Naive thymus-derived CD4-positive, alpha-beta T cell (primary cell): ENCODE measurements at regions of chr14 and their contacts with region 1.

Region 1: GRCh38 chr14:51219473-51220448 is 20.3 kb upstream of the TMX1 start:
- DNase-seq: no peak
- ATAC-seq: no peak
- H3K4me3 ChIP-seq: no peak overlapping the region
- H3K4me3 Mint-ChIP-seq: no peak overlapping the region
- H3K27ac ChIP-seq: no peak overlapping the region
- H3K27ac Mint-ChIP-seq: no peak overlapping the region
- H3K4me1 ChIP-seq: no peaks in the 10 kb centered on the region
- H3K4me1 Mint-ChIP-seq: no peaks in the 10 kb centered on the region
- H3K27me3 ChIP-seq: no peaks in the 10 kb centered on the region
- H3K27me3 Mint-ChIP-seq: peaks cover 0 to 2% (median 0%) of the 10 kb centered on the region in 5 donors

Region 2: GRCh38 chr14:50954811-50955372 is 264.9 kb before region 1 on chr14:
- CTCF ChIA-PET with region 1: no interaction called
- POLR2A ChIA-PET with region 1: no interaction called
- intact Hi-C with region 1: loop called (anchors 1 to 10 kb)
- DNase-seq: peak in 2 of 9 donors; percentile 4 to 22
- ATAC-seq: peak; percentile 70
- H3K4me3 ChIP-seq: no peak overlapping the region
- H3K4me3 Mint-ChIP-seq: no peak overlapping the region
- H3K27ac ChIP-seq: no peak overlapping the region
- H3K27ac Mint-ChIP-seq: no peak overlapping the region
- H3K4me1 ChIP-seq: no peaks in the 10 kb centered on the region
- H3K4me1 Mint-ChIP-seq: no peaks in the 10 kb centered on the region
- H3K27me3 ChIP-seq: no peaks in the 10 kb centered on the region
- H3K27me3 Mint-ChIP-seq: peaks cover 0 to 3% (median 0%) of the 10 kb centered on the region in 5 donors

Region 3: DNA sequence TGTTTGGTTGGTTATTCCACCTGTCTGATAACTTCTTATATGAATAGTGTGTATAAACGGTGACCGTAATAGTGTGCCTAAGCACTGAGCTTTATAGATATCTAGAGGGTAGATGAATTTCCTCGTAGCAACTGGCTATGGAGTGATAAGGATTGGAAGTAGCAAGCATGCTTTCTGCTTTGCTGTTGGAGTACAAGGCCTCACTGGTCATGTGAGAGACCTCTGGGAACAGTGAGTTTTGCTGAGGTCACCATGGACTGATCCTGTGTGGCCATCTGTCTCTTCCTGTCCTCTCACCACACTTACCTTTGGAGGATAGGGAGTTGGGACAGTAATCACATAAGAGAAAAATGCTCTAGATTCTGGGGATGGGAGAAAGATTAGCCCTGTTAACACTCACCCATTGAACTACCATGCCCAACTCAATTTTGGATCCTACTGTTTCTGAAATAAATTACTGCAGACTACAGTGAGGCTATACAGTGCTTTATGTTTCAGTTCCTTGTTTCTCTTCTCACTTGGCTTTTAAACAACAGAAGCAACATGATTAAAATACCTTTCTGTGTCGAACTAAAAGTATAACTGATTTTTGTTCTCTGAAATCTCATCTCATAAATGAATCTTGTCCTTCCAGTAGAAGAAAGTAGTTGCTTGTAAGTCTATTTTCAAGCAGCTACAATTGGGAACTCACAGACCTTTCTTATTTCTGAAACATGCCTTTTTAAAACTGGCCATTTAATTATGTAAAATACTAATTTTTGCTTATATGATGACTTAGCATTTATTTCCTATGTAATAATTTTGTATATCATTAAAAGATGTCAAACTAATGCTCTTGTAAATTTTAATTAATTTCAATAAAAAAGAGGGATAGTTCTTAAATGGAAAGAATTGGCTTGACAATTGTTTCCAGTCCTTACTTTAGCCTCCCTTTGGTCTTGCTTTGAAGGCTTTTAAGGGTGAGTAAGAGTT is 28.5 kb after region 1 on chr14:
- CTCF ChIA-PET with region 1: no interaction called
- POLR2A ChIA-PET with region 1: no interaction called
- intact Hi-C with region 1: no loop called
- DNase-seq: no peak
- ATAC-seq: no peak
- H3K4me3 ChIP-seq: no peak overlapping the region
- H3K4me3 Mint-ChIP-seq: no peak overlapping the region
- H3K27ac ChIP-seq: no peak overlapping the region
- H3K27ac Mint-ChIP-seq: no peak overlapping the region
- H3K4me1 ChIP-seq: peaks cover 0 to 3% of the 10 kb centered on the region in 2 donors
- H3K4me1 Mint-ChIP-seq: peaks cover 0 to 32% (median 16%) of the 10 kb centered on the region in 7 donors
- H3K27me3 ChIP-seq: no peaks in the 10 kb centered on the region
- H3K27me3 Mint-ChIP-seq: no peaks in the 10 kb centered on the region

Region 4: GRCh38 chr14:52267501-52268278 is 1047.9 kb after region 1 on chr14 and contains the start of gene PTGDR:
- CTCF ChIA-PET with region 1: no interaction called
- POLR2A ChIA-PET with region 1: no interaction called
- intact Hi-C with region 1: no loop called
- DNase-seq: peak in 2 of 9 donors; percentile 13 to 43
- ATAC-seq: peak; percentile 73
- H3K4me3 ChIP-seq: peak within 1 kb of the TSS; percentile 53
- H3K4me3 Mint-ChIP-seq: peak within 1 kb of the TSS; percentile 54 to 94 (median 82)
- H3K27ac ChIP-seq: no peak within 1 kb of the TSS
- H3K27ac Mint-ChIP-seq: peak within 1 kb of the TSS in 4 of 9 donors; percentile 45 to 73 (median 64)
- H3K4me1 ChIP-seq: peaks cover 5 to 37% of the 10 kb centered on the region in 2 donors
- H3K4me1 Mint-ChIP-seq: peaks cover 12 to 51% (median 42%) of the 10 kb centered on the region in 7 donors
- H3K27me3 ChIP-seq: no peaks in the 10 kb centered on the region
- H3K27me3 Mint-ChIP-seq: peaks cover 36 to 75% (median 45%) of the 10 kb centered on the region in 5 donors
- total RNA-seq, gene PTGDR: 0.22 to 12.4 (median 0.80) TPM